Activated CD4-positive, alpha-beta T cell treated with anti-CD3 and anti-CD28 coated beads, Interleukin-2, amount 10 ng/mL, durations not matched to agents 24 days and 14 days (primary cell): ENCODE measurements at regions of chr4 and their contacts with region 1.

Region 1: DNA sequence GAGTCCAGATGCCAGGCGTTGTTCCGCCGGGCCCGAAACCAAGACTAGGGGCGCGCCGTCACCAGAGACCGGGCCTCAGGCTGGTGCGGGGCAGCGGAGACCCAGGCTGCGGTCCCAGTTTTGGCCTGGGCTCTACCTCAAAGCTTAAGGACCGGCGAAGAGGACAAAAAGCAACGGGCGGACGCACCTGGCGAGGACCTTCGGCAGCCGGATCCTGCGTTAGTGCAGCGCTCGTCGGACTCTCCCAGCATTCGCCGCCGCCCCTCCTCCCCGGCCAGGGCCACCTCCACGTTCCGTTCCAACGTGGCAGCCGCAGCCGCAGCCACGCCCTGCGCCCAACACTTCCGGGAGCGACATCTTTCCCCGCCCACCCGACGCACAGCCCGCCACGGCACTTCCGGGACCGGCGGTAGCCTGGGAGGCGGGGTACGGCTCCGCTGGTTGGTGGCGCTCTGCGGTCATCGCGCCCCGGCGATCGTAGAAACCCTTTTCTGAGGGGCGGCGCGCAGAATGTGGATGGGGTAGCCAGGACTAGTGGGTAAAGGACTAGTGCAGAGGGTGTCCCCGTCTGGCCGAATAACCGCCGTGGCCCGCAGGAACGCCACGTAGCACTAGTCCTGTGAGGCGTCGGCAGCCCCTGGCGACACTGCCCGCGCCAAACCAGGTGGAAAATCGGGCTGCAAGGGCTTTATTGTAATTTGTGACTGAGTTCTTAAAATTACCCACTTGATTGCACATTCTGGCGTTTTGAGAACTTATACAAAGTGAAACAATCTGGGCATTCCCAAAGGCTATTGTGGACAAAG is at the start of gene SEC31A:
- DNase-seq: peak; percentile 99
- H3K4me3 Mint-ChIP-seq: peak within 1 kb of the TSS; percentile 88
- H3K27ac Mint-ChIP-seq: peak within 1 kb of the TSS; percentile 90
- H3K4me1 Mint-ChIP-seq: peaks cover 41% of the 10 kb centered on the region
- H3K27me3 Mint-ChIP-seq: no peaks in the 10 kb centered on the region
- total RNA-seq, gene SEC31A: 122 and 125 TPM in 2 replicates

Region 2: GRCh38 chr4:82371497-82371896 is 519.6 kb before region 1 on chr4:
- intact Hi-C with region 1: no loop called
- DNase-seq: peak; percentile 57
- H3K4me3 Mint-ChIP-seq: peak overlapping the region; percentile 91
- H3K27ac Mint-ChIP-seq: peak overlapping the region; percentile 98
- H3K4me1 Mint-ChIP-seq: peaks cover 53% of the 10 kb centered on the region
- H3K27me3 Mint-ChIP-seq: no peaks in the 10 kb centered on the region

Region 3: DNA sequence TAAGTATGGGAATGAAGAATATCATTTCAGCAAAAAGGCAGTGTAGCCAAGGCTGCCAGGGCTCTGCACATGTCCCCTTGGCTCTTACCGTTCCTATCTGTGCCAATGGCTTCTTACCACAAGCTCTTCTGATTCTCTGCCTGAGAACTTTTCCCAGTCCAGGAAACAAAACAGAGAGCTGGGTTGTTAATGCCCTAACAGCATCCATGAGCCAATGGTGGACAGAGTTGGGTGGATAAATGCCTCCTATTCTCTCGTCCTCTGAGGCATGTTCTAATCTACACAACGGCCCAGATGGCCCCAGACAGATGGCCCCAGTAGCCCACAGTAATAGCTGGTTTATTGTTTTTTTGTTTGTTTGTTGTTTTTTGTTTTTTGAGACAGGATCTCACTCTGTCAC is 120.5 kb before region 1 on chr4:
- intact Hi-C with region 1: no loop called
- DNase-seq: no peak
- H3K4me3 Mint-ChIP-seq: no peak overlapping the region
- H3K27ac Mint-ChIP-seq: no peak overlapping the region
- H3K4me1 Mint-ChIP-seq: no peaks in the 10 kb centered on the region
- H3K27me3 Mint-ChIP-seq: peaks cover 6% of the 10 kb centered on the region

Region 4: GRCh38 chr4:82865592-82865991 is 25.5 kb before region 1 on chr4:
- intact Hi-C with region 1: loop called (anchors 1 kb)
- DNase-seq: peak; percentile 84
- H3K4me3 Mint-ChIP-seq: peak overlapping the region; percentile 39
- H3K27ac Mint-ChIP-seq: peak overlapping the region; percentile 87
- H3K4me1 Mint-ChIP-seq: peaks cover 34% of the 10 kb centered on the region
- H3K27me3 Mint-ChIP-seq: no peaks in the 10 kb centered on the region